CD14-positive monocyte (primary cell): ENCODE measurements at regions of chr5 and their contacts with region 1.

Region 1: DNA sequence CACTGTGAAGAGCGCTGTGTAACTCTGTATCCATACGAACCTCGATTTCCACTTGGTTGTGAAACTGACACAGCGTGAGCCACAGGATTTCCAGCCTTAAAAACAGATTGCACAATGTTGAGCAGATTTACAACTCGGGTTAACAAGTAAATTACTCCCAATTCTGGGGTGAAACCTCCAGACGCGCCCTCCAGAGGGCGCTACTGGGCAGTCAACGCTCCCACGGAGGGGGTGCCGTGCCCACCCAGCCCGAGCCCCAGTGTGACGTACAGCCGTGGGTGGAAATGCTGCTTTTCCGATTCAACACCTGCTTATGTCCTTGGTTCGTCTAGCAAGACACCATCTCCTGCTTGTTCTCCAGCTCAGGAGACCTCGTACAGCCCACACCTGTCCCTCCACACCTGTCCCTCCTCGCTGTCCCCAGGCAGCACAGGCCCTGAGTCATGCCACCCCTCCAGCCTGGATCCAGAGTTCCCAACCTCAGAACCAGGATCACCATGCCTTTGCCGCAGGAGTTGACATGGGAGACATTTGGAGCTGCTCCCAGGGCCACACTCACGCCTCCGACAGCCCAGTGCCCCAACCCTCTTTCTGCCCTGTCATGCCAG is 34.4 kb upstream of the SLC6A3 start:
- DNase-seq: peak; percentile 96 to 98 (median 97)
- H3K4me3 ChIP-seq: peak overlapping the region in 2 of 3 experiments; percentile 17 to 44
- H3K4me3 Mint-ChIP-seq: peak overlapping the region; percentile 71 to 83
- H3K27ac ChIP-seq: peak overlapping the region; percentile 98 to 99
- H3K27ac Mint-ChIP-seq: peak overlapping the region; percentile 100
- H3K4me1 ChIP-seq: peaks cover 70 to 72% of the 10 kb centered on the region in 2 donors
- H3K4me1 Mint-ChIP-seq: peaks cover 79% of the 10 kb centered on the region
- H3K27me3 ChIP-seq: no peaks in the 10 kb centered on the region
- H3K27me3 Mint-ChIP-seq: peaks cover 0 to 5% (median 0%) of the 10 kb centered on the region in 3 donors
- CTCF ChIP-seq: peak; percentile 97

Region 2: DNA sequence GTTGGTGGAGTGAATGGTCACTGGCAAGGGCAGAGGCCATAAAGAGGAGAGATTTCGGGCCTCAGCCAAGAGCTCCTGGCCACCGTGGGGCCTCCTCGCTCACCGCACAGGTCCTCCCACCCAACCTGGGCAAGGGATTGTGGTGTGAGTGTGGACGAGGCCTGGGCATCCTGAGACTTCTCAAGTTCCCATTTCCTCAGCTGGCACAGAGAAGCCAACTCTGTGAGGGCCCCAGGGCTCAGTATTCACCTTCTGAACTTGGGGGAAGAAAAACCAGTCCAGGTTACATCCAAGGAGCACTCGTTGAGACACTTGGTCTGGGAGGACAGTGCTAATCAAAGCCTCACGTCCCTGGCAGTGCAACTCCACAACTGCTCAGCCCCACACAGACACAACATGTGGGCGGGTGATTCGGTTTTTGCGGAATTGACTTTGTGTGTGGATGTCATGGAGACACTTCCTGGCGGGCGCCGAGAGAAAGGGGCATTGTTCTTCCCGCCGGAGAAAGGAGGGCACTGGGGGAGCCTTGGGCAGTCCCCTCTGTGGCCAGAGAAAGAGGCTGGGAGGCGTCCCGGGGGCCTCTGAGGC is 499.6 kb before region 1 on chr5:
- intact Hi-C with region 1: no loop called
- DNase-seq: no peak
- H3K4me3 ChIP-seq: no peak overlapping the region
- H3K4me3 Mint-ChIP-seq: no peak overlapping the region
- H3K27ac ChIP-seq: no peak overlapping the region
- H3K27ac Mint-ChIP-seq: no peak overlapping the region
- H3K4me1 ChIP-seq: no peaks in the 10 kb centered on the region
- H3K4me1 Mint-ChIP-seq: no peaks in the 10 kb centered on the region
- H3K27me3 ChIP-seq: peaks cover 0 to 2% of the 10 kb centered on the region in 2 donors
- H3K27me3 Mint-ChIP-seq: peaks cover 3 to 9% (median 8%) of the 10 kb centered on the region in 3 donors
- CTCF ChIP-seq: no peak

Region 3: GRCh38 chr5:1105350-1106265 is 374.1 kb before region 1 on chr5:
- intact Hi-C with region 1: loop called in 1 of 2 experiments (anchors 10 kb)
- DNase-seq: peak; percentile 23 to 42 (median 33)
- H3K4me3 ChIP-seq: peak overlapping the region in 2 of 3 experiments; percentile 32 to 41
- H3K4me3 Mint-ChIP-seq: peak overlapping the region; percentile 67 to 69
- H3K27ac ChIP-seq: no peak overlapping the region
- H3K27ac Mint-ChIP-seq: peak overlapping the region; percentile 25 to 97 (median 95)
- H3K4me1 ChIP-seq: peaks cover 73 to 74% of the 10 kb centered on the region in 2 donors
- H3K4me1 Mint-ChIP-seq: peaks cover 84% of the 10 kb centered on the region
- H3K27me3 ChIP-seq: peaks cover 0 to 5% of the 10 kb centered on the region in 2 donors
- H3K27me3 Mint-ChIP-seq: peaks cover 0 to 12% (median 6%) of the 10 kb centered on the region in 3 donors
- CTCF ChIP-seq: no peak

Region 4: DNA sequence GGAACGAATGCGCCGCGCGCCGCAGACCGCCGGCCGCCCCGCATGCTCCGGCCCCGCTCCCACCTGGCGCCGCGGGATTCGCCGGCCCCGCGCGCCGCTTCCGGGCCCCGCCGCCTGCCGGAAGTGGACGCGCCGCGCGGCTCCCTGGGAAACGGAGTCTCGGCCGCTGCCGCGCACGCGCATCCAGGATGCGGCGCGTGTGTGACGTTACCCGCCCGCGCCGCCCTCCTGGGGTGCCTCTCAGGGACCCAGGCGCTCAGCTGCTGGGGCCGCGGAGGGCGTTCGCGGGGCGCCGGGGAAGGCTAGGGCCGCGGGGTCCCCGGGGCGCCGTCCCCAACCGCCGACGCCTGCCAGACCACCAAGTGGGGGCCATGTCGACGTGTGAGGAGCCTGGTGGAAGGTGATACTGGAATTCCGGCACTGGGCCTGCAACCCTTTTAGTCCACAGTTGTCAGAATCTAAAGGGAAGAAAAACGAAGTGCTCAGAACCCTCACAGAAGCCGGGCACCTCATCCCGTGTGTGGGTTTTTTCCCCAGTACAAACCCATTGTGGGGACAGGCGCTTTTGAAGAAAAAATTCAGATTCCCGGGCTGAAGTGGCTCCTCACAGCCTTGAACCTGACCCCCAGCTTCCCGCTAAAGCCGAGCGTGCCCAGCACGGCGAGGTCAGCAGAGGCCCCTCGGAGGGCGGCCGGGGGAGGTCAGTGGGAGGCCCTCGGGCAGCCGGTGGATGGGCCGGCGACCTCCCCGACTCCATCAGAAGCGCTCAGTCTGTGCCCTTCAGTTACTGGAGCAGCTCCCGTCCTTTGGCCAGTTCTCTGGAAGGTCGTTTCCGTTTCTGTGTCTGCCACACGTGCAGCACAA is 134.5 kb before region 1 on chr5 and contains the start of gene CLPTM1L:
- intact Hi-C with region 1: loop called in 1 of 2 experiments (anchors 10 kb)
- DNase-seq: peak; percentile 87 to 88 (median 87)
- H3K4me3 ChIP-seq: peak within 1 kb of the TSS; percentile 87 to 97 (median 93)
- H3K4me3 Mint-ChIP-seq: peak within 1 kb of the TSS; percentile 85 to 90
- H3K27ac ChIP-seq: peak within 1 kb of the TSS; percentile 58 to 95
- H3K27ac Mint-ChIP-seq: peak within 1 kb of the TSS; percentile 19 to 84 (median 63)
- H3K4me1 ChIP-seq: peaks cover 16 to 30% of the 10 kb centered on the region in 2 donors
- H3K4me1 Mint-ChIP-seq: peaks cover 26% of the 10 kb centered on the region
- H3K27me3 ChIP-seq: no peaks in the 10 kb centered on the region
- H3K27me3 Mint-ChIP-seq: peaks cover 0 to 2% (median 0%) of the 10 kb centered on the region in 3 donors
- CTCF ChIP-seq: no peak
- polyA plus RNA-seq, gene CLPTM1L: 14.1 to 76.2 (median 35.0) TPM

Region 5: GRCh38 chr5:1409381-1410110 is 70.1 kb before region 1 on chr5:
- intact Hi-C with region 1: no loop called
- DNase-seq: no peak
- H3K4me3 ChIP-seq: no peak overlapping the region
- H3K4me3 Mint-ChIP-seq: no peak overlapping the region
- H3K27ac ChIP-seq: no peak overlapping the region
- H3K27ac Mint-ChIP-seq: no peak overlapping the region
- H3K4me1 ChIP-seq: no peaks in the 10 kb centered on the region
- H3K4me1 Mint-ChIP-seq: no peaks in the 10 kb centered on the region
- H3K27me3 ChIP-seq: no peaks in the 10 kb centered on the region
- H3K27me3 Mint-ChIP-seq: peaks cover 7 to 12% (median 9%) of the 10 kb centered on the region in 3 donors
- CTCF ChIP-seq: no peak

Region 6: DNA sequence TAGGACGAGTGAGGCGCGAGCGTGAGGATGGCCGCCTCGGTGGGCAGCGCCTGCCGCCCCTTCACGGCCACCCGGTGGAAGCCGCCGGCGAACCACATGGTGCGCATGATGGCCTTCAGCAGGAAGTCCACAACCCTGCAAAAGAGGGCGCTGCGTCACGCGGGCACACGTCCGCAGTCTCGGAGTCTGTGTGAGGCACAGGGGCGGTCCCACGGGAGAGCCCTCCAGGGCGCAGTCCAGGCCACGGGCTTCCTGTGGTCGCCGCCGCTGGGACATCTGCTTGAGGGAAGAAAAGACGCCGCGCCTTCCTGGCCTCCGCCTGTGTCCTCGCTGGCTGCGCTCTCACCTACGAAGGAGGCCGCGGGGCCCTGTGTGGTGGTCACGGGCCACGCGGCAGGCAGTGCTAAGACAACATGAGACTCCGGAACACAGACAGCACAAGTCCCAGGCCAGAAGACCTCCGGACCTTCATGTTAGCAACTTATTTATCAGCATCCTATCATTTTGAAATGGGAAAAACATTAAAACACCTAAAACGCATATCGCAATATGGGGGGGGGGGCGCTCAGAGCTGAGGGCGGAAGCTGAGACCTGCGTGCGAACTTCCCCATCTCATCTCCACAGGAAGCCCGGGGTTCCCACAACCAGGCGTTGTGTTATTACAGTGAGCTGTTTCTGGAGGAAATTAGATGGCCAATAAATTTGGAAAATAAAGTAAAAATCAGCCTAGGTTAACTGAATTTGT is 15.3 kb after region 1 on chr5:
- intact Hi-C with region 1: loop called in 1 of 2 experiments (anchors 2 kb)
- DNase-seq: peak; percentile 86 to 95 (median 87)
- H3K4me3 ChIP-seq: peak overlapping the region in 2 of 3 experiments; percentile 22 to 51
- H3K4me3 Mint-ChIP-seq: peak overlapping the region; percentile 58 to 85
- H3K27ac ChIP-seq: peak overlapping the region; percentile 98
- H3K27ac Mint-ChIP-seq: peak overlapping the region; percentile 94 to 100 (median 98)
- H3K4me1 ChIP-seq: peaks cover 77 to 88% of the 10 kb centered on the region in 2 donors
- H3K4me1 Mint-ChIP-seq: peaks cover 86% of the 10 kb centered on the region
- H3K27me3 ChIP-seq: no peaks in the 10 kb centered on the region
- H3K27me3 Mint-ChIP-seq: peaks cover 0 to 4% (median 2%) of the 10 kb centered on the region in 3 donors
- CTCF ChIP-seq: no peak

Region 7: DNA sequence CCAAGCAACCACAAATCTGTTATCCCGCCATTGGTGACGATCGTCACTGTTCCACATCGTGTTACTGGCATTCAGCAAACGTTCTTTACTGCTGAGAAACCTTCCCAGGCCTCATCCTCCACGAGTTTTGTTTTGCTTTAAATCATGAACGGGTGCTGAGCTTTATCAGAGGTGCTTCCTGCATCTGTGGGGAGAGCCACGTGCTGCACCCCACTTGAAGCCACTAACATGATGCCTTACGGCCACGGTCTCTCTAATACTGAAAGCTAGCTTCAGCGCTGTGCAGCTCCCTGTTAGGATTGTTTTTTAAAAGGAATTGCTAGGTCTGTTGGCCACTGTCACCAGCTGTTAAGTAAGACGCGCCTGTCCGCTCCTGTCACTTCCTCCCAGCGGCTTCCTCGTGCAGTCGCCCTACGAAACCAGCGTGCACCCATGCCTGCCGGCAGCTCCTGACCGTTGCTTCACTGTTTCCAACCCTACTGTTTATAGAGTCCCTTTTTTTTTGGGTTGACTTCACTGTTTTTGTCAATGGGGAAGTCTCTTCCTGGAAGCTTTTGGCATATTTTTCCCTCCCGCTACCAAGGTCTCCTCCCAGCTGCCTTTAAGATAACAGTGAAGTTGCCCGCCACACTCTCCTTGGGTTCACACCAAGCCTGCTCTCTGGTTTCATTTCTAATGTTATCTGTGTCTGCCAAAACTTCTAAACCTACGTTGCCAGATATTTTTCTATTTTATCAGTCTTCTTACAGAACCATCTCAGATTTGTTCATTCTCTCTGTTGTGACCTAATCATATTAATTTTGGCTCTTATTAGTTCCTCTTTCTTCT is 23.8 kb after region 1 on chr5:
- intact Hi-C with region 1: loop called in 1 of 2 experiments (anchors 2 kb)
- DNase-seq: peak; percentile 92 to 94 (median 94)
- H3K4me3 ChIP-seq: peak overlapping the region in 2 of 3 experiments; percentile 2 to 46
- H3K4me3 Mint-ChIP-seq: peak overlapping the region; percentile 70 to 88
- H3K27ac ChIP-seq: peak overlapping the region; percentile 94 to 96
- H3K27ac Mint-ChIP-seq: peak overlapping the region; percentile 99 to 100 (median 100)
- H3K4me1 ChIP-seq: peaks cover 84 to 96% of the 10 kb centered on the region in 2 donors
- H3K4me1 Mint-ChIP-seq: peaks cover 89% of the 10 kb centered on the region
- H3K27me3 ChIP-seq: no peaks in the 10 kb centered on the region
- H3K27me3 Mint-ChIP-seq: peaks cover 0 to 5% (median 0%) of the 10 kb centered on the region in 3 donors
- CTCF ChIP-seq: no peak

Region 8: GRCh38 chr5:1516751-1517601 is 37.3 kb after region 1 on chr5:
- intact Hi-C with region 1: loop called (anchors 5 kb)
- DNase-seq: peak; percentile 39 to 68 (median 58)
- H3K4me3 ChIP-seq: no peak overlapping the region
- H3K4me3 Mint-ChIP-seq: peak overlapping the region; percentile 16 to 62
- H3K27ac ChIP-seq: peak overlapping the region; percentile 81 to 86
- H3K27ac Mint-ChIP-seq: peak overlapping the region; percentile 86 to 97 (median 91)
- H3K4me1 ChIP-seq: peaks cover 48 to 56% of the 10 kb centered on the region in 2 donors
- H3K4me1 Mint-ChIP-seq: peaks cover 60% of the 10 kb centered on the region
- H3K27me3 ChIP-seq: no peaks in the 10 kb centered on the region
- H3K27me3 Mint-ChIP-seq: peaks cover 0 to 4% (median 0%) of the 10 kb centered on the region in 3 donors
- CTCF ChIP-seq: no peak

Region 9: DNA sequence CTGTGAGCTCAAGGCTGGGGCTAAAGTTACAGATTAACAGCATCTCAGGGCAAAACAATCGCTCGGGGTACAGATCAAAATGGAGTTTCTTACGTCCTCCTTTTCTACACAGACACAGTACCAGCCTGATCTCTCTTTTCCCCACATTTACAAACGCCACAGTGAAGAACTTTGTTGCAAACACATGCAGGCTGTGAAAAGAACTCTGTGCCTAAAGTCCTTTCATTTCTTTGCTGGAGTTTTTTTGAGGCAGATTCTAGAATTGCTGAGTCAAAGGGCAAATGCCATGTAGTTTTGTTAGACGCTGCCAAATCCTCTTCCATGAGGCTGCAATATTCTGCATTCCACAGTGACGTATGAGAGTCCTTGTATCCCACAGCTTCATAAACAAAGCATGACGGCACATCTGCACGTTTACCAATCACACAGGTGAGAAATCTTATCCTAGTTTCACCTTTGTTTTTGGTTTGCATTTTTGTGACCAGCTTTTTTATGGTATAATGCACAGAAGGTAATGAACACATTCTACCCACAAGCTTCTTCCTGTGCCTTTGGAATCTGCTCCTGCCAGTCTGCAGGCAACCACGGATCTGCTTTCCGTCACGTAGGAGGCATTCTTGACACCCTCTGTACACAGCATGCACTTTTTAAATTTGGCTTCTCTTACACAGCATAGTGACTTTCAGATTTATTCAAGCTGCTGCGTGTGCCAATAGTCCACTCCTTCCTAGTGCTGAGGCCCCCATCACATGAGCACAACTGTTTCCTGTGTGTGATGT is 88.7 kb after region 1 on chr5:
- intact Hi-C with region 1: loop called (anchors 2 to 5 kb)
- DNase-seq: no peak
- H3K4me3 ChIP-seq: no peak overlapping the region
- H3K4me3 Mint-ChIP-seq: peak overlapping the region in 1 of 2 donors; percentile 12
- H3K27ac ChIP-seq: no peak overlapping the region
- H3K27ac Mint-ChIP-seq: peak overlapping the region in 4 of 7 donors; percentile 31 to 85 (median 68)
- H3K4me1 ChIP-seq: peaks cover 24 to 26% of the 10 kb centered on the region in 2 donors
- H3K4me1 Mint-ChIP-seq: peaks cover 32% of the 10 kb centered on the region
- H3K27me3 ChIP-seq: no peaks in the 10 kb centered on the region
- H3K27me3 Mint-ChIP-seq: peaks cover 0 to 4% (median 4%) of the 10 kb centered on the region in 3 donors
- CTCF ChIP-seq: no peak

Region 10: DNA sequence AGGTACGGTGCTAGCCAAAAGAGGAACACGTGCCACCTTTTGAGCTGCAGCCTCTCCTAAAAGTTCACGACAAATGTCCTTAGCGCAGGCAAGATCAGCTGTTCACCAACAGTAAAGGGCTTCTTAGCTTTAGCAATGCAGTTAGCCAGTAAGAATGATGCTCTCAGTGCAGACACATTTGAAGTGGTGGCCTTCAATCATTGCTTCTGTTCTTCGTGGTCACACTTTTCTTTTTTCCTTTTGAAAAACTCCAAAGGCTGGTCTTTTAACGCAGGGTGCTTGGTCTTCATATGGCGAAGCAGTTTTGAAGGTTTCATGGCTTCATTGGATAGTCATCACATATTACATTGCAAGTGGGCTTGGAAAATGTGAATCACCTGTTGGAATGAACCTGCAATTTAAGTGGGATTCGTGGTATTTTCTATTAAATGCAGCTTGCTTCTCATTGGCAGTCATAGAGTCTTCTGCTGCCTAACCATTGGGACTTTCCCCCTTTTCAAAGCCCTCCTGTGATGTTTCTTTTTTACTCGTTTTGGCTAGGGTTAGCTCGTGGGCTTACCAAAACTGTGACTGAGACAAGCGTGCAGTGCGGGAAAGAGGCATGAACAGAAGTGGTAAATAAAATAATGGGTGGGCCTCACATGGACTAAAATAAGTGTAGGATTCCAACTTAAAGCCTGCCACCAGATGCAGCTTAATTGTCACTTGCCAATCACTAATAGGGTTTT is 219.1 kb after region 1 on chr5:
- intact Hi-C with region 1: no loop called
- DNase-seq: no peak
- H3K4me3 ChIP-seq: no peak overlapping the region
- H3K4me3 Mint-ChIP-seq: no peak overlapping the region
- H3K27ac ChIP-seq: no peak overlapping the region
- H3K27ac Mint-ChIP-seq: no peak overlapping the region
- H3K4me1 ChIP-seq: no peaks in the 10 kb centered on the region
- H3K4me1 Mint-ChIP-seq: no peaks in the 10 kb centered on the region
- H3K27me3 ChIP-seq: no peaks in the 10 kb centered on the region
- H3K27me3 Mint-ChIP-seq: peaks cover 6 to 17% (median 7%) of the 10 kb centered on the region in 3 donors
- CTCF ChIP-seq: no peak

Region 11: GRCh38 chr5:1948663-1949652 is 469.3 kb after region 1 on chr5:
- intact Hi-C with region 1: no loop called
- DNase-seq: no peak
- H3K4me3 ChIP-seq: no peak overlapping the region
- H3K4me3 Mint-ChIP-seq: no peak overlapping the region
- H3K27ac ChIP-seq: no peak overlapping the region
- H3K27ac Mint-ChIP-seq: no peak overlapping the region
- H3K4me1 ChIP-seq: no peaks in the 10 kb centered on the region
- H3K4me1 Mint-ChIP-seq: no peaks in the 10 kb centered on the region
- H3K27me3 ChIP-seq: peaks cover 0 to 6% of the 10 kb centered on the region in 2 donors
- H3K27me3 Mint-ChIP-seq: peaks cover 10 to 28% (median 26%) of the 10 kb centered on the region in 3 donors
- CTCF ChIP-seq: no peak